ENCODE measurements at regions of chr1 and their contacts with region 1.

Region 1: GRCh38 chr1:200409761-200410565 is at the start of gene ZNF281:
- DNase-seq: peak; percentile 89 to 95 (median 93)
- ATAC-seq: peak; percentile 99
- H3K4me3 ChIP-seq: peak within 1 kb of the TSS; percentile 69
- H3K4me3 Mint-ChIP-seq: peak within 1 kb of the TSS; percentile 93 to 100 (median 98)
- H3K27ac ChIP-seq: peak within 1 kb of the TSS; percentile 86
- H3K27ac Mint-ChIP-seq: peak within 1 kb of the TSS; percentile 92 to 99 (median 97)
- H3K4me1 ChIP-seq: peaks cover 36 to 37% of the 10 kb centered on the region in 2 donors
- H3K4me1 Mint-ChIP-seq: peaks cover 36 to 63% (median 54%) of the 10 kb centered on the region in 7 donors
- H3K27me3 ChIP-seq: no peaks in the 10 kb centered on the region
- H3K27me3 Mint-ChIP-seq: peaks cover 0 to 12% (median 0%) of the 10 kb centered on the region in 5 donors
- total RNA-seq, gene ZNF281: 16.3 to 27.6 (median 25.8) TPM

Region 2: DNA sequence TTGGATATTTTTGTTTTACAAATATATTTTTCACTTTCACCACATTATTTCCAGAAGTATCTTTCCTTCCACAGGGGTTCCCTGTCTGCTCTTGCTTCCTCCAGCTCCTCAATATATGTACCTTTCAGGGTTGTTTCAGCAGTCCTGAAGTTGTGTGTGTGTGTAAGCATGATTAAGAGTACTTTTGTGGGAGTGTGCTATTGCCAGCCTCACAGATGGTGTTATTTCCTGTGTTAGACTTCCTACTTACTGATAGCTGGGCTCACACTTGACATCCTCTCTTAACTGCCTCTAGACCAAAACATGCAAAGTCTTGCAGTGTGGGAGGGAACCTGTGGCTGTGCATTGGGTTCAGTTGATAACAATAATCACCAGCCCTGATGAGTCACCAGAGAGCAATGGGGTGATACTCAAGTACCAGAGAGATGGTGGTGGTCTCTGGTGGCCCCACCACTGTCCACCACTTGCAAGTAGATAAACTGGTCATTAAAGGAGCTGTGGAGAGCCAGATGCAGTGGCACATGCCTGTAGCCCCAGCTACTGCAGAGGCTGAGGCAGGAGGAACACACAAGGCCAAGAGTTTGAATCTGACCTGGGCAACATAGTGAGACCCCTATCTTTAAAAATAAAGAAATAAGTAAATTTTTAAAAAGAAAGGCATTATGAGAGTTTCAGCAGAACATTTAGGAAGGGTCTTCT is 255.7 kb before region 1 on chr1:
- CTCF ChIA-PET with region 1: no interaction called
- POLR2A ChIA-PET with region 1: no interaction called
- intact Hi-C with region 1: loop called (anchors 1 to 5 kb)
- DNase-seq: peak in 8 of 9 donors; percentile 26 to 65 (median 50)
- ATAC-seq: peak; percentile 88
- H3K4me3 ChIP-seq: no peak overlapping the region
- H3K4me3 Mint-ChIP-seq: peak overlapping the region; percentile 45 to 87 (median 67)
- H3K27ac ChIP-seq: peak overlapping the region; percentile 64
- H3K27ac Mint-ChIP-seq: peak overlapping the region; percentile 74 to 99 (median 89)
- H3K4me1 ChIP-seq: peaks cover 27 to 30% of the 10 kb centered on the region in 2 donors
- H3K4me1 Mint-ChIP-seq: peaks cover 18 to 54% (median 29%) of the 10 kb centered on the region in 7 donors
- H3K27me3 ChIP-seq: no peaks in the 10 kb centered on the region
- H3K27me3 Mint-ChIP-seq: peaks cover 0 to 2% (median 0%) of the 10 kb centered on the region in 5 donors

Region 3: GRCh38 chr1:200351826-200352549 is 58.0 kb before region 1 on chr1:
- CTCF ChIA-PET with region 1: no interaction called
- POLR2A ChIA-PET with region 1: no interaction called
- intact Hi-C with region 1: loop called (anchors 1 kb)
- DNase-seq: peak in 7 of 9 donors; percentile 14 to 49 (median 39)
- ATAC-seq: peak; percentile 77
- H3K4me3 ChIP-seq: peak overlapping the region; percentile 41
- H3K4me3 Mint-ChIP-seq: peak overlapping the region; percentile 65 to 88 (median 82)
- H3K27ac ChIP-seq: peak overlapping the region; percentile 43
- H3K27ac Mint-ChIP-seq: peak overlapping the region; percentile 80 to 95 (median 91)
- H3K4me1 ChIP-seq: peaks cover 8 to 16% of the 10 kb centered on the region in 2 donors
- H3K4me1 Mint-ChIP-seq: peaks cover 21 to 45% (median 31%) of the 10 kb centered on the region in 7 donors
- H3K27me3 ChIP-seq: no peaks in the 10 kb centered on the region
- H3K27me3 Mint-ChIP-seq: no peaks in the 10 kb centered on the region

Region 4: GRCh38 chr1:200428482-200429205 is 18.7 kb after region 1 on chr1:
- CTCF ChIA-PET with region 1: no interaction called
- POLR2A ChIA-PET with region 1: no interaction called
- intact Hi-C with region 1: no loop called
- DNase-seq: no peak
- ATAC-seq: no peak
- H3K4me3 ChIP-seq: no peak overlapping the region
- H3K4me3 Mint-ChIP-seq: no peak overlapping the region
- H3K27ac ChIP-seq: no peak overlapping the region
- H3K27ac Mint-ChIP-seq: no peak overlapping the region
- H3K4me1 ChIP-seq: no peaks in the 10 kb centered on the region
- H3K4me1 Mint-ChIP-seq: peaks cover 0 to 9% (median 0%) of the 10 kb centered on the region in 7 donors
- H3K27me3 ChIP-seq: no peaks in the 10 kb centered on the region
- H3K27me3 Mint-ChIP-seq: peaks cover 0 to 6% (median 0%) of the 10 kb centered on the region in 5 donors

Region 5: DNA sequence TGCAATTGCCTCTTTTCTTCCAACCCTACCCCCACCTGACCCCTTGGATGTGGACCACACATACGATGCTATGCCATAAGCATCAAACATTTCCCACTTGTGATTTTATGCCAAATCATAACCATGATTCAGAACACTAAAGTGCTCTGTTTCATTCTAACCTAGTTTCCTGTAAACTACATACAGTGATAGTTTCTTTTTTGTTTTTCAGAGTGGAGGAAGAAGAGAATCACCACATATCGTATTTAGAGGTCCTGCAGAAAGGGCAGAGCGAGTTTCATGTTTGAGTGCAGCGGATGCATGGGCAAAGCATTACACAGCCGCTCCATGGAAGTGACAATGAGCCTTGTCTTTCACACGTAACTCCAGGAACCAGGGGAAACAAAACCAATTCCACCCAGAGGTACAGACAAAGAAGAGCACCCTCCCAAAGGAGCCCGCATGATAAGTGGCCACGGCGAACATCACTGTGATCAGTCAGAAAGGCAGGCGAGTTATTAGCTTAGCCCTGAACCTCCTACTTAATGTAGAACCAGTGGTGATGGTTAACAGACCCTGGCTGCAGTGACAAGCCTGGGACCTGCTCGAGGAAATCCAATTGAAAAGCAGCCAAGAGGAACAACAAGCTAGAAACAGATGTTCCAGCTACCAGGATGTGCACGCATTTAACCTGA is 63.9 kb after region 1 on chr1:
- CTCF ChIA-PET with region 1: no interaction called
- POLR2A ChIA-PET with region 1: no interaction called
- intact Hi-C with region 1: loop called in 1 of 2 experiments (anchors 5 kb)
- DNase-seq: no peak
- ATAC-seq: peak; percentile 26
- H3K4me3 ChIP-seq: no peak overlapping the region
- H3K4me3 Mint-ChIP-seq: peak overlapping the region in 1 of 10 donors; percentile 65
- H3K27ac ChIP-seq: no peak overlapping the region
- H3K27ac Mint-ChIP-seq: peak overlapping the region in 1 of 9 donors; percentile 71
- H3K4me1 ChIP-seq: peaks cover 0 to 8% of the 10 kb centered on the region in 2 donors
- H3K4me1 Mint-ChIP-seq: peaks cover 0 to 20% (median 0%) of the 10 kb centered on the region in 7 donors
- H3K27me3 ChIP-seq: no peaks in the 10 kb centered on the region
- H3K27me3 Mint-ChIP-seq: peaks cover 0 to 26% (median 7%) of the 10 kb centered on the region in 5 donors

Region 6: DNA sequence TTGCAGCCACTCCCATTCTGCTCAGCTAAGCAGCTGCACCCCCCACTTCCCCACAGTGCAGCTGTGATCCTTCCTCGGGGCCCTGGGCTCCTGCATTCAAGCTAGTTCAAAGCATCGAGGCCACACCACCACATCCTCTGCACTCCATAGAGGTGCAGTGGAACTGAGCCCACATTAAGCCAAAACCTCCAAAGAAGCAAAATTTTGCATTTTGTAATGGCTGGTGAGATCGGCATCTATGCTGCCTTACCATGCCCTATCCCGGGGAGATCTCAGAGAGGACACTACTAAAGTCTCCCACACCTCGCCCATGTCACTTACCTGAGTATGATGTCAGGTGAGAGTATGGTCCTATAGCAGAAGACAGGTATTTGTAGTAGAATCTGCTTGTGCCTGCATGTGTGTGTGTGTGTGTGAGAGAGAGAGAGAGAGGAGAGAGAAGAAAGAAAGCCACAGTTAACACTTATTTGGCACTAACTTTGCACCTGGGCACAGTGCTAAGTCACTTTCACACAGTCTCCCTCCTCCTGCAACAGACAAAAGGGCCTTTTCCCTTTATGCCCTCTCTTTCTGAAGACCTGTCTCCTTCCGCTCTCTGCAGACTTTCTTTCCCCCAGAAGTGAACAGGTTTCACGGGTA is 120.8 kb after region 1 on chr1:
- CTCF ChIA-PET with region 1: no interaction called
- POLR2A ChIA-PET with region 1: no interaction called
- intact Hi-C with region 1: loop called in 1 of 2 experiments (anchors 1 kb)
- DNase-seq: peak; percentile 22 to 87 (median 79)
- ATAC-seq: peak; percentile 97
- H3K4me3 ChIP-seq: peak overlapping the region; percentile 29
- H3K4me3 Mint-ChIP-seq: peak overlapping the region; percentile 41 to 86 (median 78)
- H3K27ac ChIP-seq: peak overlapping the region; percentile 62
- H3K27ac Mint-ChIP-seq: peak overlapping the region; percentile 71 to 92 (median 86)
- H3K4me1 ChIP-seq: peaks cover 16 to 34% of the 10 kb centered on the region in 2 donors
- H3K4me1 Mint-ChIP-seq: peaks cover 16 to 61% (median 53%) of the 10 kb centered on the region in 7 donors
- H3K27me3 ChIP-seq: no peaks in the 10 kb centered on the region
- H3K27me3 Mint-ChIP-seq: no peaks in the 10 kb centered on the region

Region 7: GRCh38 chr1:200669314-200670241 is 259.6 kb after region 1 on chr1 and contains the start of gene DDX59:
- CTCF ChIA-PET with region 1: no interaction called
- POLR2A ChIA-PET with region 1: no interaction called
- intact Hi-C with region 1: loop called in 1 of 2 experiments (anchors 5 kb)
- DNase-seq: peak; percentile 81 to 95 (median 85)
- ATAC-seq: peak; percentile 92
- H3K4me3 ChIP-seq: peak within 1 kb of the TSS; percentile 93
- H3K4me3 Mint-ChIP-seq: peak within 1 kb of the TSS; percentile 96 to 99 (median 98)
- H3K27ac ChIP-seq: peak within 1 kb of the TSS; percentile 98
- H3K27ac Mint-ChIP-seq: peak within 1 kb of the TSS; percentile 89 to 99 (median 97)
- H3K4me1 ChIP-seq: peaks cover 13 to 16% of the 10 kb centered on the region in 2 donors
- H3K4me1 Mint-ChIP-seq: peaks cover 20 to 60% (median 51%) of the 10 kb centered on the region in 7 donors
- H3K27me3 ChIP-seq: no peaks in the 10 kb centered on the region
- H3K27me3 Mint-ChIP-seq: no peaks in the 10 kb centered on the region
- total RNA-seq, gene DDX59: 20.6 to 41.3 (median 31.1) TPM

Region 8: GRCh38 chr1:201023517-201023902 is 613.5 kb after region 1 on chr1 and contains the start of gene KIF21B:
- CTCF ChIA-PET with region 1: no interaction called
- POLR2A ChIA-PET with region 1: no interaction called
- intact Hi-C with region 1: loop called in 1 of 2 experiments (anchors 1 kb)
- DNase-seq: peak; percentile 86 to 95 (median 91)
- ATAC-seq: peak; percentile 91
- H3K4me3 ChIP-seq: peak within 1 kb of the TSS; percentile 93
- H3K4me3 Mint-ChIP-seq: peak within 1 kb of the TSS; percentile 91 to 100 (median 96)
- H3K27ac ChIP-seq: peak within 1 kb of the TSS; percentile 83
- H3K27ac Mint-ChIP-seq: peak within 1 kb of the TSS; percentile 93 to 100 (median 98)
- H3K4me1 ChIP-seq: peaks cover 39 to 59% of the 10 kb centered on the region in 2 donors
- H3K4me1 Mint-ChIP-seq: peaks cover 51 to 77% (median 70%) of the 10 kb centered on the region in 7 donors
- H3K27me3 ChIP-seq: no peaks in the 10 kb centered on the region
- H3K27me3 Mint-ChIP-seq: no peaks in the 10 kb centered on the region
- total RNA-seq, gene KIF21B: 68.3 to 97.6 (median 73.4) TPM